ENCODE measurements at regions of chr4 and their contacts with region 1.

Region 1: GRCh38 chr4:8198906-8199593 is at the start of gene SH3TC1:
- DNase-seq: peak; percentile 94
- H3K4me3 ChIP-seq: peak within 1 kb of the TSS; percentile 72 to 77 (median 76)
- H3K27ac ChIP-seq: peak within 1 kb of the TSS; percentile 82
- H3K4me1 ChIP-seq: peaks cover 63% of the 10 kb centered on the region
- H3K27me3 ChIP-seq: no peaks in the 10 kb centered on the region
- CTCF ChIP-seq: no peak
- POLR2A ChIP-seq: peak; percentile 95
- total RNA-seq, gene SH3TC1: 174 and 192 TPM in 2 replicates

Region 2: DNA sequence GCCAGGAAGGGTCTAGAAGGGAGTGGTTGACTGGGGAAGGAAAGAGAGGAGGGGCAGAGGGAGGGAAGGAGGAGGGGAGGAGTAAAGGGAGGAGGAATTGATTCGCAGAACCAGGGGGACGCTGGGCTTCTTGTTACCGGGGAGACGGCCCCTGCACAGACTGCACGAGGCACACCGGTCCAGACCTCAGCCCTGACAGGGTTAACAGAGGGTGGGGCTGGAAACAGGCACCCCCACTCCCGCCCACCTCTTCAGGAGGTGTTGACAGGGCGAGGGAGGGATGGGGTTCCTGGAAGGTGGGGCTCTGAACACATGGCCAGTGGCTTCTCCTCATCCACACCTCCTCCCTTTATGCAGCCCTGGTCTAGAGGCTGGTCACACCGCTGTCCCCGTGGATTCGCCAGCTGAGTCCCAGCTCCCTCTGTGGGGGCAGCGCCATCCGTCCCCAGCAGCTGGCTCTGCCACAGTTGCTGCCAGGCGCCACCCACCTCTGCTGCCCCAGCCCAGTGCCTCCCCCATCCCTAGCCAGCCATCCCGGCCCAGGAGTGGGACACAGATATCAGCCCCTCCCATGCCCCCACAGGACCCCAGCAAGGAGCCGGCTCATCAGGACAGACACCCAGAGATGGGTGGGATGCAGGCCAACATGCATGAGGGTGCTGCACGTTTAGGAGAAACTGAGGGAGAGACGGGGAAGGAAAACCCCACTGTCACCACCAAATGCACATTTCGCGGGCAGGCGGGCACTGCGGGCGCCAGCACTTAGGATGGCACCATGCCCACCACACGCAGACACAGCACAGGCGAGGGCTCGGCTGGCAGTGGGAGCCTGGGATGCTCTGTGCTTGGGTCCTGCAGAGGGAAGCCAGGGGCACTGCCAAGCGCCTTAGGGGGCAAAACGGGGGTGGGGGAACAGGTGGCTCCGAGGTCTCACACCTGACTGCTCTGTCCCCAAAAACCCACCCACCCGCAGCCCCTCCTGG is 128.0 kb before region 1 on chr4:
- CTCF ChIA-PET with region 1: no interaction called
- POLR2A ChIA-PET with region 1: no interaction called
- dilution Hi-C with region 1: no loop called
- intact Hi-C with region 1: no loop called
- DNase-seq: no peak
- H3K4me3 ChIP-seq: no peak overlapping the region
- H3K27ac ChIP-seq: no peak overlapping the region
- H3K4me1 ChIP-seq: no peaks in the 10 kb centered on the region
- H3K27me3 ChIP-seq: peaks cover 0 to 8% of the 10 kb centered on the region in 2 experiments
- CTCF ChIP-seq: no peak
- POLR2A ChIP-seq: no peak

Region 3: GRCh38 chr4:8158710-8159536 is 40.1 kb before region 1 on chr4 and contains the start of gene ABLIM2:
- CTCF ChIA-PET with region 1: no interaction called
- POLR2A ChIA-PET with region 1: interaction called, 3 read pairs
- dilution Hi-C with region 1: no loop called
- intact Hi-C with region 1: loop called (anchors 2 kb)
- DNase-seq: peak; percentile 97
- H3K4me3 ChIP-seq: peak within 1 kb of the TSS; percentile 21 to 70 (median 51)
- H3K27ac ChIP-seq: no peak within 1 kb of the TSS
- H3K4me1 ChIP-seq: peaks cover 11% of the 10 kb centered on the region
- H3K27me3 ChIP-seq: peaks cover 16 to 17% of the 10 kb centered on the region in 2 experiments
- CTCF ChIP-seq: no peak
- POLR2A ChIP-seq: peak; percentile 59
- total RNA-seq, gene ABLIM2: 0.30 and 0.66 TPM in 2 replicates

Region 4: GRCh38 chr4:8182858-8183725 is 16.0 kb before region 1 on chr4:
- CTCF ChIA-PET with region 1: interaction called, 196 read pairs
- POLR2A ChIA-PET with region 1: no interaction called
- dilution Hi-C with region 1: no loop called
- intact Hi-C with region 1: loop called (anchors 1 kb)
- DNase-seq: peak; percentile 76
- H3K4me3 ChIP-seq: no peak overlapping the region
- H3K27ac ChIP-seq: peak overlapping the region; percentile 1
- H3K4me1 ChIP-seq: peaks cover 20% of the 10 kb centered on the region
- H3K27me3 ChIP-seq: no peaks in the 10 kb centered on the region
- CTCF ChIP-seq: no peak
- POLR2A ChIP-seq: no peak

Region 5: GRCh38 chr4:8428293-8429097 is 229.4 kb after region 1 on chr4:
- CTCF ChIA-PET with region 1: no interaction called
- POLR2A ChIA-PET with region 1: interaction called, 3 read pairs
- dilution Hi-C with region 1: no loop called
- intact Hi-C with region 1: loop called (anchors 5 kb)
- DNase-seq: peak; percentile 85
- H3K4me3 ChIP-seq: peak overlapping the region; percentile 35 to 80 (median 67)
- H3K27ac ChIP-seq: peak overlapping the region; percentile 78
- H3K4me1 ChIP-seq: peaks cover 13% of the 10 kb centered on the region
- H3K27me3 ChIP-seq: no peaks in the 10 kb centered on the region
- CTCF ChIP-seq: peak; percentile 40 to 77
- POLR2A ChIP-seq: peak; percentile 76

Measured in endothelial cell of umbilical vein (primary cell).